Posterior cingulate gyrus (tissue), 11 donors: ENCODE measurements at regions of chr12 and their contacts with region 1.

Region 1: DNA sequence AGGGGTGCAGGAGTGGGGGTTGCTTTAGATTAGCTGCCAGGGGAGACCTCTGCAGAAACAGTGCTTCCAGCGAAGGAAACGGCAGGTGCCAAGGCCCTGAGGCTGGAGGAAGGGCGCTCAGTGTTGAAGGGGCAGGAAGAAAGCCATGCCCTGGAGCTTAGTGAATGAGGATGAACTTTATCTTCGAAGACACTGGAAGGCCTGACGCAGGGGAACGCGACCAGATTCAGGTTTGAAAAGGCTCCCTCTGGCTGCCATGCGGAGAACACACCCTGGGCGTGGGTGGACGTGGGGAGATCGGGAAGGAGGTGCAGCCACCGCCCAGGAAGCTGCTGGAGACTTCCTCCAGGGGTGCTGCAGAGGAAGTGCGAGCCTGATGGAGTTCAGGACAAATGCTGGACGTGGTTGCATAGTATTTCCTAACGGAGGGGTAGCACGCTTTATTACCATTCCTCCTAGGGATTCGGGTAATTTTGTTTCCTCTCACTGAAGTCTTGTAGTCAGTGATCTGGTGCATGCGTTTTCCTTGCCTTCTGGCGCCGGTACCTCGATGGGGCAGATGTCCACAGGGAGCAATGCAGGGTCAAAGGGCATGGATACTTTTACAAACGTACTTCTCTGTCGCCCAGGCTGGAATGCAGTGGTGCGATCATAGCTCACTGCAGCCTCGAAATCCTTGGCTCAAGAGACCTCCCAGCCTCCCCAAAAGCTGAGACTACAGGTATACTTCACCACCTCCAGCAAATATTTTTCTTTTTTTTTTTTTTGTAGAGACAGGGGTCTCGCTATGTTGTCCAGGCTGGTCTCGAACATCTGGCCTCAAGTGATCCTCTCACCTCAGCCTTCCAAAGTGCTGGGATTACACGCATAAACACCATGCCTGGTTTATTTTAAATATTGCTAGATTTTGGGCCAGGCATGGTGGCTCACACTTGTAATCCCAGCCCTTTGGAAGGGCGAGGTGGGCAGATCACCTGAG is 26.4 kb upstream of the UBC start:
- DNase-seq: peak; percentile 80 to 98 (median 87)

Region 2: DNA sequence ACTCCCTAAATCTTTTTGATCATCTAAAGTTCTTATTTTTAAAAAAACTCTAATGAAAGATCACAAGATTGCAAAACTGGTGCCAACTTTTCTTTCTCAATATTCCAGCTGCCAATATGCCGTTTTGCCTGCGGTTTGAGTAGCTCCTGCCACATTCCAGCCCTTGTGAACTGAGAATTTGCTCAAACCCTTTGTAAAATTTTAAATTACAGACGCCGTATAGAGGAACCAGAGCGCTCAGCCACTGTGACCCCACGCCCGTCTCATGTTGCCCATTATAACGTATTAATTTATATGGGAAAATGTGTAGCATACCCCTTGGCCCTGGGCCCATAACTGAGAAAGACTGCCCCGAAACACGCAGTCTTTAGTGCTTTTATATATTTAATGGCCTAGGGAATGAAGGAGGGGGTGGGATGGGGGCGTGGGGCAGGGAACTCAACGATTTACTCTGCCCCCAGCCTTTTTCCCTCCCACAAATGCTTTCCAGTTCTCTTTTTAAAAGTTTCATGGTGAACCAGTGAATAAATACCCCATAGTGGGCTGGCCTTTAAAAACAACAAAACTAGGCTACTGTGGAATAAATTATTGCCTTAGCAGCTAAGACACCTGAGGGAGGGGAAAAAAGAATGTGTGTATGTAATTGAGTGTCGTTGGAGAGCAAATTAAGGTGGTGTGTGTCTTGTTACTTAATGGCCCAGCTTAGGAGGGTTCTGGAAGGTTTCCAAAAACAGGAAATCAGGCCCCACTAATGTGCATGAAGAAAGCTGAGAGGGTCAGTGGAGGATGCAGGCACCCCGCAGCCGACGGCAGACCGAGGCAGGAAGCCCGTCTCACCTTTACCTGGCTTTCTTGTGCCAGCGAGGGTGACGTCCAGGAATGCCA is 691.7 kb before region 1 on chr12:
- intact Hi-C with region 1: no loop called
- DNase-seq: no peak

Region 3: GRCh38 chr12:124906606-124907261 is 34.1 kb before region 1 on chr12:
- intact Hi-C with region 1: loop called (anchors 5 kb)
- DNase-seq: peak in 9 of 10 donors; percentile 48 to 94 (median 84)

Region 4: GRCh38 chr12:124927201-124928094 is 13.4 kb before region 1 on chr12:
- intact Hi-C with region 1: loop called (anchors 1 kb)
- DNase-seq: peak; percentile 82 to 99 (median 91)